ENCODE measurements at regions of chr17 and their contacts with region 1.

Region 1: DNA sequence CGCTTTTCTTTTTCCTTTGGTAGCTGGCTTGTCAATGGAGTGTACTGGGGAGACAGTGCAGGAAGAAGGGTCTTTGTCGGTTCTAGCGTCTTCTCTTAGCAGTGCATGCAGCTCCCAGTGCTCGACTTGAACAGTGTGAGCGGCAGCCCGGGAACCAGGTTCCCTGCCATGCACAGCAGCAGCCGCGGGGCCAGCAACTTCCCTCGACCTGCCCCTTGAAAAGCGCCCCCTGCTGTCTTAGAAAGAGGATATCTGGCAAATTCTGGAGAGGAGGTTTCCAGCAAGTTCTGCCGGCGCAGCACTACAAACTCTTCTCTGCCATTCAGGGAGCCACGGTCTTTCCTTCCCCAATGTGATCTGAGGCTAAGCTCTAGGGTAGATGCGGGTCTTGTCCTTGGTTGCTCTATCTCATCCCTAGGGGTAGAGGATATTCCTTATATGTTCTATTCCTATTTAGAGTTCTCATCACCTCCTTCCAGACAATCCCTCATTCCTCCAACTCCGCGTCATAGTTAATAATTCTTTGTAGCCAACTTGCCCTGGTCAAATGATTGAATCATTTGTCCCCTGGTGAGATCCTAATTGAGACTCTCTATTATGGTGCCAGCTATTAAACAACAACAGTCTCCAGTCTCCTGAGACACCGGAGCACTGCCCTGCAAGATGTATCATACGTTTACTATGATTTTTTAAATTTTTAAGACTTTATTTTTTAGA is 451.3 kb downstream of the PMP22 start:
- DNase-seq: peak in 1 of 2 experiments; percentile 2
- H3K4me3 ChIP-seq: no peak overlapping the region
- H3K27ac ChIP-seq: no peak overlapping the region
- H3K4me1 ChIP-seq: no peaks in the 10 kb centered on the region
- H3K27me3 ChIP-seq: no peaks in the 10 kb centered on the region
- CTCF ChIP-seq: peak; percentile 29; the same call in 1 of the 2 replicates

Region 2: DNA sequence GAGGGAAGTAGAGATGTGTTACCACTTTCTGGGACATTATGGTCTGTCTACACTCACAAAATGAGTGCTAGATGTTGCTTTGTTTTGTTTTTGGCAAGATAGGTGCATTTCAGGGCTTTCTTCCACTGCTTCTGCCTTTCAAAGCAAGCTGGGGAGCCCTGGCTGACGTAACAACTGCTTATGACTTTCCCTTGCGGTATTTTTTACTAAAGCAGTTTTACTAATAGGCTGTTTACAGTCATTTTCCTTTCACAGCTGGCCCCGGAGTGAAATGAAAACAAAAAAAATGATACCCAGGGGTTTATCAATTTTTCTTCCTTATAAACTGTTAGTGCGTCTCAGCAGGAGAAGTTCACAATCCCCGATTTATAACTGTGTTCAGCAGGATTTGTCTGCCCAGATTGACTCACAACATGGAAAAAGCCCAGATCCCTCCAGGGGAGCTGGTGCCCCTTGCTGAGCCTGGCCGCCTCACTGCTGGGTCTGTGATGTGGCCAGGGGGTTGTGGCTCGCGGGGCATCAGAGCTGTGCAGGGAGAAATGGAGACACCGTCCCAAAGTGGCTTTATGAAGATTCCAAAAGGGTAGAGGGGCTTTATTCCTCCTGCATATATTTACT is 1027.7 kb before region 1 on chr17:
- CTCF ChIA-PET with region 1: interaction called, 11 read pairs
- POLR2A ChIA-PET with region 1: no interaction called
- intact Hi-C with region 1: no loop called
- DNase-seq: no peak
- H3K4me3 ChIP-seq: no peak overlapping the region
- H3K27ac ChIP-seq: no peak overlapping the region
- H3K4me1 ChIP-seq: no peaks in the 10 kb centered on the region
- H3K27me3 ChIP-seq: no peaks in the 10 kb centered on the region
- CTCF ChIP-seq: no peak

Region 3: DNA sequence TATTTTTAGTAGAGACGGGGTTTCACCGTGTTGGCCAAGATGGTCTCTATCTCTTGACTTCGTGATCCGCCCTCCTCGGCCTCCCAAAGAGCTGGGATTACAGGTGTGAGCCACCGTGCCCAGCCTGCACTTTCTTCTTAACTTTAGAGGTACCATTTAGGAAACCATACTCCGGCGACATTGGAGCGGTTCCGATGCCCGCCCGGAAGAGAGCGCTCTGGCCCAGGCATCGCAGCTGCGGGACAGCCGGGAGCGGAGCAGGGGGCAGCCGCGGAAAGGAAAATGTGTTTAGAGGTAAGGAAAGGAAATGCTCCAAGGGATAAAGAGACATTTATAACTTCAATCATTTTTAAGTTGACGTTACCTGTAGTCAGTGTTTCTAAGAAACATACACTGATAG is 518.9 kb before region 1 on chr17:
- CTCF ChIA-PET with region 1: interaction called, 24 read pairs
- POLR2A ChIA-PET with region 1: no interaction called
- intact Hi-C with region 1: no loop called
- DNase-seq: no peak
- H3K4me3 ChIP-seq: no peak overlapping the region
- H3K27ac ChIP-seq: no peak overlapping the region
- H3K4me1 ChIP-seq: no peaks in the 10 kb centered on the region
- H3K27me3 ChIP-seq: 0 out of 2 replicates have a peak, but pooled peaks cover 18% of the 10 kb centered on the region
- CTCF ChIP-seq: no peak

Region 4: GRCh38 chr17:14712611-14713021 is 101.2 kb before region 1 on chr17:
- CTCF ChIA-PET with region 1: no interaction called
- POLR2A ChIA-PET with region 1: no interaction called
- intact Hi-C with region 1: no loop called
- DNase-seq: no peak
- H3K4me3 ChIP-seq: no peak overlapping the region
- H3K27ac ChIP-seq: no peak overlapping the region
- H3K4me1 ChIP-seq: no peaks in the 10 kb centered on the region
- H3K27me3 ChIP-seq: no peaks in the 10 kb centered on the region
- CTCF ChIP-seq: no peak

Measured in PC-9 (cell line).